HCT116 (cell line): ENCODE measurements at regions of chr5 and their contacts with region 1.

Region 1: DNA sequence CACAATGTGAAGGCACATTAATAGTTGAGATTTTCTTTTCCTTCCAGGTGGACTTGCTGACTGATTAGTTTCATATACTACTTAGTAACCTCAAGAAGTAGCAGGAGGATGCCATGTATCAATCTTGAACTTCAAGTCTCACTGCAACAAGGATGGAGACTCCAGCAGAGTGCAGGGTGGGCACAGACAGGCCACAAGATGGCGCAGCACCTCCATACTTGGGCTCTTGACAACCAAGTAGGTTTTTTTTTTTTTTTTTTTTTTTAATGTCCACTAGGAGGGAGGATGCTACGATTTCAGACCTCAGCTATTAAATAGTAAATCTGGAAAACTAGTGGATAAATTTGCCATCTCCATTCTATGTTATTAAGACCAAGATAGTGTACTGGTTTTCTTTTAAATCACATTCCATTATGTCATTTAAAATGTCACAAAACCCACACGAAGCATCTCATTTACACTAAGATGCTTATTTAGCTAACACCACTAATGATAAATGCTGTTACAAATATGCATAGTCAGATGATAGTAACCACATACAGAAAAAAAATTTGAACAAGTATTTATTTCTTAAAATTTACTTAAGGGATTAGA is 58.6 kb downstream of the IL6ST start:
- DNase-seq: peak; percentile 79
- ATAC-seq: peak; percentile 92
- H3K4me3 ChIP-seq: no peak overlapping the region
- H3K27ac ChIP-seq: no peak overlapping the region
- H3K4me1 ChIP-seq: no peaks in the 10 kb centered on the region
- H3K27me3 ChIP-seq: no peaks in the 10 kb centered on the region
- CTCF ChIP-seq: peak; percentile 95 to 99 (median 98)
- POLR2A ChIP-seq: no peak
- RAD21 ChIP-seq: peak; percentile 95

Region 2: GRCh38 chr5:56070851-56071465 is 134.8 kb after region 1 on chr5:
- CTCF ChIA-PET with region 1: interaction called, 22 read pairs
- POLR2A ChIA-PET with region 1: no interaction called
- RAD21 ChIA-PET with region 1: interaction called, 10 to 11 read pairs
- intact Hi-C with region 1: loop called (anchors 5 kb)
- DNase-seq: no peak
- ATAC-seq: no peak
- H3K4me3 ChIP-seq: no peak overlapping the region
- H3K27ac ChIP-seq: no peak overlapping the region
- H3K4me1 ChIP-seq: no peaks in the 10 kb centered on the region
- H3K27me3 ChIP-seq: no peaks in the 10 kb centered on the region
- CTCF ChIP-seq: no peak
- POLR2A ChIP-seq: no peak
- RAD21 ChIP-seq: no peak

Region 3: GRCh38 chr5:56200856-56201666 is 264.9 kb after region 1 on chr5:
- CTCF ChIA-PET with region 1: interaction called, 102 read pairs
- POLR2A ChIA-PET with region 1: interaction called, 10 read pairs
- RAD21 ChIA-PET with region 1: interaction called, 19 to 20 read pairs
- intact Hi-C with region 1: loop called (anchors 1 kb)
- DNase-seq: peak; percentile 69
- ATAC-seq: peak; percentile 100
- H3K4me3 ChIP-seq: no peak overlapping the region
- H3K27ac ChIP-seq: no peak overlapping the region
- H3K4me1 ChIP-seq: no peaks in the 10 kb centered on the region
- H3K27me3 ChIP-seq: no peaks in the 10 kb centered on the region
- CTCF ChIP-seq: peak; percentile 71 to 97 (median 86)
- POLR2A ChIP-seq: no peak
- RAD21 ChIP-seq: peak; percentile 97

Region 4: DNA sequence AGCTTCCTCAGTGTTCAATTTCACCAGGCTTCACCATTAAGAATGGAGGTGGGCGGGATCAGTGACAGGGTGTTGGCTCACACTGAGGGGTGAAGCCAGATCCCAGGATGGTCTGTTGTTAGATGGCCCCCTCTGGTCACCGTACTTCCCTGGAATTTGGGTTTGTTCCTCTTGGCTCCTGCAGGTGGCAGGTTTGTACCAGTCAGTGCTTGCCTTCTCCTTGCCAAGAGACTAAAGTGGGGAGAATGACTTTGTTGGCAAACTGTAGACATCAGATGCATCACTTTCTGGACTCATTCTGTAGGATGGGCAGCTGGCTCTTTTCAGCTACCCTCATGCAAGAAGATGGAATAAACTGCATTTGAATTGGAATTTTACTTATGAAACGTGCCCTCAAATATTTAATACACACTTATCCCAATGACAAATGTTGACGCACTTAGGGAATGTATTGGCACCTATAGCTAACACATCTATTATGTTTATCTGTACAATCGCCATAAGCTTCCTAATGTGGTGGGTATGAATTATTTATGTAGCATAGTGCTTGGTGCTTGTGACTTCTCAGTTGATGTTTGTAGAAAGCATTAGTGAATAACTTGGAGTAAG is 328.3 kb after region 1 on chr5:
- CTCF ChIA-PET with region 1: interaction called, 18 read pairs
- POLR2A ChIA-PET with region 1: no interaction called
- RAD21 ChIA-PET with region 1: interaction called in 1 of 2 experiments, 6 read pairs
- intact Hi-C with region 1: loop called (anchors 1 kb)
- DNase-seq: peak; percentile 61
- ATAC-seq: peak; percentile 99
- H3K4me3 ChIP-seq: no peak overlapping the region
- H3K27ac ChIP-seq: no peak overlapping the region
- H3K4me1 ChIP-seq: peaks cover 0 to 6% of the 10 kb centered on the region in 2 experiments; a peak in 1 of 4 replicates
- H3K27me3 ChIP-seq: no peaks in the 10 kb centered on the region
- CTCF ChIP-seq: peak; percentile 85 to 86 (median 86)
- POLR2A ChIP-seq: no peak
- RAD21 ChIP-seq: peak; percentile 86

Region 5: GRCh38 chr5:56270568-56271392 is 334.6 kb after region 1 on chr5:
- CTCF ChIA-PET with region 1: interaction called, 12 read pairs
- POLR2A ChIA-PET with region 1: no interaction called
- RAD21 ChIA-PET with region 1: interaction called in 1 of 2 experiments, 6 read pairs
- intact Hi-C with region 1: loop called (anchors 1 kb)
- DNase-seq: peak; percentile 62
- ATAC-seq: peak; percentile 99
- H3K4me3 ChIP-seq: no peak overlapping the region
- H3K27ac ChIP-seq: no peak overlapping the region
- H3K4me1 ChIP-seq: no peaks in the 10 kb centered on the region
- H3K27me3 ChIP-seq: no peaks in the 10 kb centered on the region
- CTCF ChIP-seq: peak; percentile 82 to 99 (median 96)
- POLR2A ChIP-seq: no peak
- RAD21 ChIP-seq: peak; percentile 96

Region 6: DNA sequence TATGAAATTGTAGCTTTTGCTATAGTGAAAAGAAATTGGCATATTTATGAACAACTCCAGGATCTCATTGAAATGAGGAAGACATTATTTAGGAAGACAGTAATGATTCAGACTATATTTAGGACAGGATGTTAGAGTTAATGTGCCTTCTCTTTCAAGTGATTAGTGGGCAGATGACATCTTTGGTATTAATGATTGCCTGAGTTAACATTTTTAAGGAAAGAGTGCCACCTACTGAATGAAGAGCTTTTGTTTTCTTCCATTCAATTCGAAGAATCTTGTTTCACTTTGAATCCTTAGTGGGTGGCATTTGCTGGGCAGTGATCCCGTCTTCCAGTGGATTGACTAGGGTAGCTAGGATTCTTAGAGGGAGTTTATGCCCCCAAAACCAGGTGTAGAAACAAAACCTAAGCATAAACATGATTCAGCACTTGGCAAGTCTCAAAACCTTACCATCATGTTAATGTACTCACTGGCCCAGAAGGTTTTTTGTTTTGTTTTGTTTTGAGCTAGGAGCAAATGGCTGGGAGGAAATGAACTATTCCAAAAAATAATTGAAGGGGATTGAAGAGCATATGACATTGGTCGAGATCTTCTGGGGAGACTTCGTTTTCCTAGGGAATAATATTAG is 902.3 kb after region 1 on chr5:
- CTCF ChIA-PET with region 1: interaction called, 9 read pairs
- POLR2A ChIA-PET with region 1: no interaction called
- RAD21 ChIA-PET with region 1: no interaction called
- intact Hi-C with region 1: loop called (anchors 2 kb)
- DNase-seq: no peak
- ATAC-seq: peak; percentile 60; the same call in 1 of the 2 replicates
- H3K4me3 ChIP-seq: no peak overlapping the region
- H3K27ac ChIP-seq: no peak overlapping the region
- H3K4me1 ChIP-seq: peaks cover 2 to 5% of the 10 kb centered on the region in 2 experiments; a peak in 2 of 4 replicates
- H3K27me3 ChIP-seq: no peaks in the 10 kb centered on the region
- CTCF ChIP-seq: peak in 2 of 3 experiments; percentile 60 to 65; a peak in 3 of 6 replicates
- POLR2A ChIP-seq: no peak
- RAD21 ChIP-seq: peak; percentile 85

Region 7: DNA sequence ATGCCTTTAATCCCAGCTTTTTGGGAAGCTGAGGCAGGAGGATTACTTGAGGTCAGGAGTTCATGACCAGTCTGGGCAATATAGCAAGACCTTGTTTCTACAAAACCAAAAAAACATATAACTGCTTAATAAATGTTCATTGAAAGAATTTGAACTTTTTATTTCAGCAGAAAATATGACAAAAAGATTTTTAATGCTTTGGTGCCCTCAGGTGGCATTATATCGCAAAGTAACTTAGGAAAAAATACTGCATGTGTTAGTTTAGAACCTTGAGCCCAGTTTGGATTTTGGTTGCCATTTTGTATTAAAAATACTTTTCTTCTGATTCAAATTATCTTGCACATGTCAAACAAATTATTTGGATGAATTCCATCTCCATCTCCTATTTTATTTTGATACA is 1340.9 kb after region 1 on chr5:
- CTCF ChIA-PET with region 1: no interaction called
- POLR2A ChIA-PET with region 1: no interaction called
- RAD21 ChIA-PET with region 1: no interaction called
- intact Hi-C with region 1: loop called (anchors 5 kb)
- DNase-seq: peak; percentile 13
- ATAC-seq: no peak
- H3K4me3 ChIP-seq: no peak overlapping the region
- H3K27ac ChIP-seq: no peak overlapping the region
- H3K4me1 ChIP-seq: peaks cover 0 to 4% of the 10 kb centered on the region in 2 experiments; a peak in 1 of 4 replicates
- H3K27me3 ChIP-seq: no peaks in the 10 kb centered on the region
- CTCF ChIP-seq: peak; percentile 18 to 55 (median 54); a peak in 4 of 6 replicates
- POLR2A ChIP-seq: no peak
- RAD21 ChIP-seq: peak; percentile 72